ENCODE measurements at regions of chr1 and their contacts with region 1.

Region 1: DNA sequence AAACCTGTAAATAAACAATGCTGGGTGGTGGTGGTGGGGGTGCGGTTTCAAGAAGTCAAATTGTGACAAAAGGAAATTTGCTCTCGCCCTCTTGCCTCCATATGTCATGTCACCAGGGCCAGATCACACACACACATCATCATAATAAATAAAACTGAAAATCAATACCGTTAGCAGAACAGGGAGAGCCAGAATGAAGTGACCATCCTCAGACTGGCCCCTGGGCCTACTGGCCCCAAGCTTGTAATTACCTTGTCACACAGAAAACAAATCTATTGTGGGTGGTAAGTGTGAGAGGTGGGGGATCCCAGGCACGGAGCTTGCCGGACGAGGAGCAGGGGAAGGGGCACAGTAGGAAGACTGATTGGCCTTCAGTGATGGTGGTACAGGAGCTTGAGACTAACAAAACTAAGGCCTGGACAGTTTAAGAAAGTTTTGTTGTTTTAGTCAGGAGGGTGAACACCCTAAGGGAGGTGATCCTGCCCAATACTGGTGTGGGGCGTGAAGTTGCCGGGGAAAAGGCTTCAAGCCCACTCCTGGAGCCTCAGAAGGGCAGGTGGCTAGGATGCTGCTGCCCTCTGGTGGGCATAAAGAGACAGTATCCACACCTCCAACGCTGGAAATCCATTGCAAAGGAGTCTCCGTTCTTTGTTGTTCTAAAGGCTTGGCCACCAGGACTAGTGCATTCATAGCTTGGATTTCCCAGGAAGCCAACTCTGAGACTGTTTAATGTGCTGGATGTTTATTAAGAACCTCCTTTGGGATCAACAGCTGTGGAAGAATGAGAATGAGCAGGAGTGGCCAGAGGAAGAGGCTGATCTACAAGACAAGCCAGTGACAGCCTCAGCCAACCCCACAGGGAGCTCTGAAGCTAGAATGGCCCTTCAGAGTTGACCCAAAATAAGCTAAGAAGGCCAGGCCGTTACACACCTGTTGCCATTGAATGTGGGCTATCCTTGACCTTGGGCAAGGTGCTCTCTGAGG is 8.1 kb upstream of the C1orf216 start:
- DNase-seq: no peak
- H3K4me3 ChIP-seq: no peak overlapping the region
- H3K27ac ChIP-seq: no peak overlapping the region
- H3K4me1 ChIP-seq: no peaks in the 10 kb centered on the region
- H3K27me3 ChIP-seq: no peaks in the 10 kb centered on the region
- CTCF ChIP-seq: peak; percentile 51 to 85 (median 80)

Region 2: GRCh38 chr1:35451125-35451528 is 275.6 kb before region 1 on chr1:
- intact Hi-C with region 1: loop called (anchors 5 kb)
- DNase-seq: peak; percentile 19 to 88
- H3K4me3 ChIP-seq: no peak overlapping the region
- H3K27ac ChIP-seq: no peak overlapping the region
- H3K4me1 ChIP-seq: peaks cover 9 to 16% of the 10 kb centered on the region in 2 donors
- H3K27me3 ChIP-seq: no peaks in the 10 kb centered on the region
- CTCF ChIP-seq: peak; percentile 75 to 88 (median 85)

Region 3: DNA sequence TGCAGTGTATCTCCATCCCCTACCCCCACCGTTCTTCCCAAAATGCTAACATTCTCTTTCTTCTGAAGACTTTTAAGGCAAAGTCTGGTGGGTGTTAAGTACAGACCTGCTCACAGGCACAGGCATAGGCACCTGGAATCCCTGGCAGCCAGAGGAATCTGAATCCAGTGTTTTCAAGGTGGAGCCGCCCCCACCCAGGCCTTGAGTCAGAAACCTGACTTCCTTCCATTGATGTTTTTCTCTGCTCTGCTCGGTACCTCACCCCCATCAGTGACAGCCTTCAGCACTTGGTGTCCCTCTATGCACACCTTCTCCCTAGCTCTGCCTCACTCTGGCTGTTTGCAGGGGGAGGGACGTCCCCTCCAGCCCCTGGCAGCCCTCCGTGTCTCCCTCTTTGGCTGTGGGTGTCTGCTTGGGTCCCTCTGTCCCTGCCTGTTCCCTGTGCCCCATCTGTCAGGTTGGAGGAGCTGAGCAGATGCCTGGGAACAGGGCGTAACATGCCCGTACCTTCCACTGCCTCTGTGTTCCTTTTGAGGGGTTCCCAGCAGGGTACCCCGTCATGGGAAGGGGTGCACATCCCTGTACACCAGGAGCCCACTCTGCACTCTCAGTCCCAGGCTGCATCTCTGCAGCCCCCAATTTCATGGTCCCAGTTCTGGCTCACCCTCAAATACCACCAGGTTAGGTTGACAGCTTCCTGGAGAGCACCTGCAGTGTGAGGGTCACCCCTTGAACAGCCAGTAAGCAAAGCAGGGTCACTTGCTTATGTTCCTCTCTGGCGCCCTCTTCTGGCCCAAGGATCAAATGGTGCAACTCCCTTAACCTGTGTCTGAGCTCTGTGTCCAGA is 162.5 kb before region 1 on chr1:
- intact Hi-C with region 1: loop called (anchors 2 kb)
- DNase-seq: peak in 1 of 2 donors; percentile 83
- H3K4me3 ChIP-seq: no peak overlapping the region
- H3K27ac ChIP-seq: no peak overlapping the region
- H3K4me1 ChIP-seq: peaks cover 2 to 16% of the 10 kb centered on the region in 2 donors
- H3K27me3 ChIP-seq: no peaks in the 10 kb centered on the region
- CTCF ChIP-seq: peak; percentile 38 to 77 (median 69)

Region 4: DNA sequence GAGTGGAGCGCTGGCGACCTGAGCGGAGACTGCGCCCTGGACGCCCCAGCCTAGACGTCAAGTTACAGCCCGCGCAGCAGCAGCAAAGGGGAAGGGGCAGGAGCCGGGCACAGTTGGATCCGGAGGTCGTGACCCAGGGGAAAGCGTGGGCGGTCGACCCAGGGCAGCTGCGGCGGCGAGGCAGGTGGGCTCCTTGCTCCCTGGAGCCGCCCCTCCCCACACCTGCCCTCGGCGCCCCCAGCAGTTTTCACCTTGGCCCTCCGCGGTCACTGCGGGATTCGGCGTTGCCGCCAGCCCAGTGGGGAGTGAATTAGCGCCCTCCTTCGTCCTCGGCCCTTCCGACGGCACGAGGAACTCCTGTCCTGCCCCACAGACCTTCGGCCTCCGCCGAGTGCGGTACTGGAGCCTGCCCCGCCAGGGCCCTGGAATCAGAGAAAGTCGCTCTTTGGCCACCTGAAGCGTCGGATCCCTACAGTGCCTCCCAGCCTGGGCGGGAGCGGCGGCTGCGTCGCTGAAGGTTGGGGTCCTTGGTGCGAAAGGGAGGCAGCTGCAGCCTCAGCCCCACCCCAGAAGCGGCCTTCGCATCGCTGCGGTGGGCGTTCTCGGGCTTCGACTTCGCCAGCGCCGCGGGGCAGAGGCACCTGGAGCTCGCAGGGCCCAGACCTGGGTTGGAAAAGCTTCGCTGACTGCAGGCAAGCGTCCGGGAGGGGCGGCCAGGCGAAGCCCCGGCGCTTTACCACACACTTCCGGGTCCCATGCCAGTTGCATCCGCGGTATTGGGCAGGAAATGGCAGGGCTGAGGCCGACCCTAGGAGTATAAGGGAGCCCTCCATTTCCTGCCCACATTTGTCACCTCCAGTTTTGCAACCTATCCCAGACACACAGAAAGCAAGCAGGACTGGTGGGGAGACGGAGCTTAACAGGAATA is 149.4 kb before region 1 on chr1:
- intact Hi-C with region 1: no loop called
- DNase-seq: no peak
- H3K4me3 ChIP-seq: peak overlapping the region; percentile 42 to 54
- H3K27ac ChIP-seq: no peak overlapping the region
- H3K4me1 ChIP-seq: peaks cover 0 to 16% of the 10 kb centered on the region in 2 donors
- H3K27me3 ChIP-seq: peaks cover 17% of the 10 kb centered on the region
- CTCF ChIP-seq: no peak

Region 5: DNA sequence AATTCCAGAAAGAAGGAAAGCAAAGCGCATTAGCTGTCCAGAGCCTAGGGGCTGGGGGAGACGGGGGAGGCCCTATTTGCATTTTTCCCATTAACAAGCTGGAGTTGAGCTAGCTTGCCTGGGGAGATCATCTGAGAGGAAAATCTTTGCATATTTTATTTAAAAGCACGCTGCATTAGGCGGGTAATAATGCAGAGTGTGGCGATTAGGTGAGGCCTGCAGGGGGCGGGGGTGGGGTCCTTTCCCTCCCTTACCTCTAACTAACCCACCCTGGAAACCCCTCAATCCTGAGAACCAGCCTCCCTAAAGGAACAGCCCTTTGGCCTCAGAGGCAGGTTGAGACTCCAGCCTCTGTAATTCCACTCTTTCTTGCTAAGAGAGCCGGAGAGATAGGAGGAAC is 24.2 kb before region 1 on chr1:
- intact Hi-C with region 1: no loop called
- DNase-seq: no peak
- H3K4me3 ChIP-seq: no peak overlapping the region
- H3K27ac ChIP-seq: no peak overlapping the region
- H3K4me1 ChIP-seq: no peaks in the 10 kb centered on the region
- H3K27me3 ChIP-seq: no peaks in the 10 kb centered on the region
- CTCF ChIP-seq: no peak

Region 6: DNA sequence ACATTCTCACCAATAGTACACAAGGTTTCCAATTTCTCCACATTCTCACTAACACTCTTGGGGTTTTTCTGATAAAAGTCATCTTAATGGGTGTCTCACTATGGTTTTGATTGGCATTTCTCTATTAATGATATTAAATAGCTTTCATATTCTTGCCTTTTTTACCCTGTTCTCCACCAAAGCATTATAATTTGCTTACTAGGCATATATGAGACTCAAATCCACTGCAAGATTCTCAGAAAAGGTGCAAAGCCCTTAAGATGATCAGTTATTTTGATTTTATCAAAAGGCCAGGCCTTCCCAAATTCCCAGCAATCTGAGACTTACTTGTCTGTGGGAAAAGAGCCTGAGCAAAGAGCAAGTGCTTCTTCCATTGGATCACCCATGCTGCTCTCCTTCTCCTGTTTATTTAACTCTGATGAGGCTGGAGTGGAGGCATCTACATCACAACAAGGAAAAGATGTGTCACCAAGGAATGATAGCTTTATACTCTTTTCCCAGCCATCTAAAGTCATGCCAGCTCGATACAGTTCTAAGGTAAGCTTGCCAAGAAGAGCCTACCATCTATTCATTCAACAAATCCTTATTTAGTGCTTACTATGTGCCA is 18.5 kb after region 1 on chr1:
- intact Hi-C with region 1: no loop called
- DNase-seq: no peak
- H3K4me3 ChIP-seq: no peak overlapping the region
- H3K27ac ChIP-seq: no peak overlapping the region
- H3K4me1 ChIP-seq: no peaks in the 10 kb centered on the region
- H3K27me3 ChIP-seq: no peaks in the 10 kb centered on the region
- CTCF ChIP-seq: no peak

Measured in ascending aorta (tissue), 2 donors.